Ovary (tissue), 10 donors: ENCODE measurements at regions of chr9 and their contacts with region 1.

Region 1: GRCh38 chr9:134236001-134236421 is 71.6 kb upstream of the RNU6ATAC start:
- DNase-seq: peak in 2 of 5 donors; percentile 35 to 38
- H3K4me3 ChIP-seq: no peak overlapping the region
- H3K27ac ChIP-seq: no peak overlapping the region
- H3K4me1 ChIP-seq: peaks cover 15% of the 10 kb centered on the region
- H3K27me3 ChIP-seq: no peaks in the 10 kb centered on the region
- CTCF ChIP-seq: no peak
- EP300 ChIP-seq: no peak
- POLR2A ChIP-seq: no peak

Region 2: DNA sequence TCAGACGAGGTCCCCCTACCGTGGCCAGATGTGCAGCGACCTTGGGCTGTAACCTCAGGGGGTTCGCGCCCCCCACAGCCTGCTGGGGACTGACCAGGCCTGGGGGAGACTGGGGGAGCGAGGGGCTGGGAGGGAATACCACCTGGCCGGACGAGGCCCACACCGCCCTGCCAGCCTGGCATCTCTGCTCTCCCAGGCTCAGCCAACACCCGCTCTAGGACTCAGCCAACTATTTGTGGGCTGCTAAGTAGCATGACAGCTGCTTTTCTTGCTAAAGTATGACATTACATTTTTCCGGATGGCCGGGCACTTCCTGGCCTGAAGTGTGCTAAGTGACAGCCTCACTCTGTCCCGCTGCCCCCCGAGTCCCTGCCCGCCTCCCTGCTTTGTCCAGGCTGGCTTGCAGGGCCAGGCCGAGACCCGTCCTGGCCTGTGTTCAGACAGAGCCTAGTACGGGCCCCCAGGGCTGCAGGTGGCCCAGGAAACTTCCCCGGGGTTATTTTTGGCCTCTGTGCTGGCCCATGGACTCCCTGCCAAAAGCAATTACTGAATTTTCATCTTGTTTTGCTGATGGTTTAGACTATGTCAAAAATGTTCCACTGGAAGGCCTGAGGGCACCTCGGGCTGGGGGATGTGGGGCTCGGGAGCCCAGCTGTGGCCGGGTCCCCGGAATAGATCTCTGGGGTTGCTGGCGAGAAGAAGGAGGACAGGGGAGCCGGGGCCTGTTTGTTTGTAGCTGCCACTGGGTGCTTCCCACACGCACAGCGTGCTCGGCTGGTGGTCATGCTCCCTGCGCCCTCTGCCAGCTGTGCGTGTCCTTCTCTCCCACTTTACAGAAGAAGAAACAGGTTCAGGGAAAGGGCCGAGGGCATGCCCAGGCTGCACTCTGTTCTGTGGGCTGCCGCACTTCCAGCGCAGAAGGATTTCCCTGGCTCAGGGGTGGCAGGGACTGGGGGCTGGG is 743.7 kb before region 1 on chr9:
- intact Hi-C with region 1: no loop called
- DNase-seq: peak in 1 of 5 donors; percentile 24
- H3K4me3 ChIP-seq: no peak overlapping the region
- H3K27ac ChIP-seq: peak overlapping the region in 1 of 2 donors; percentile 35
- H3K4me1 ChIP-seq: peaks cover 13% of the 10 kb centered on the region
- H3K27me3 ChIP-seq: no peaks in the 10 kb centered on the region
- CTCF ChIP-seq: no peak
- EP300 ChIP-seq: no peak
- POLR2A ChIP-seq: no peak

Region 3: GRCh38 chr9:134293611-134294165 is 57.7 kb after region 1 on chr9:
- intact Hi-C with region 1: loop called in 1 of 4 experiments (anchors 10 kb)
- DNase-seq: peak in 1 of 5 donors; percentile 33
- H3K4me3 ChIP-seq: peak overlapping the region; percentile 6
- H3K27ac ChIP-seq: no peak overlapping the region
- H3K4me1 ChIP-seq: peaks cover 2% of the 10 kb centered on the region
- H3K27me3 ChIP-seq: no peaks in the 10 kb centered on the region
- CTCF ChIP-seq: no peak
- EP300 ChIP-seq: no peak
- POLR2A ChIP-seq: no peak